Activated CD4-positive, alpha-beta T cell treated with anti-CD3 and anti-CD28 coated beads, Interleukin-2, amount 10 ng/mL, durations not matched to agents 24 days and 14 days (primary cell): ENCODE measurements at regions of chr11 and their contacts with region 1.

Region 1: GRCh38 chr11:122655527-122656072 is at the start of gene UBASH3B:
- DNase-seq: peak; percentile 89
- H3K4me3 Mint-ChIP-seq: peak within 1 kb of the TSS; percentile 97
- H3K27ac Mint-ChIP-seq: peak within 1 kb of the TSS; percentile 86
- H3K4me1 Mint-ChIP-seq: peaks cover 17% of the 10 kb centered on the region
- H3K27me3 Mint-ChIP-seq: peaks cover 50% of the 10 kb centered on the region
- total RNA-seq, gene UBASH3B: 10.9 and 14.8 TPM in 2 replicates

Region 2: GRCh38 chr11:122642472-122642922 is 13.1 kb before region 1 on chr11:
- intact Hi-C with region 1: loop called (anchors 2 kb)
- DNase-seq: no peak
- H3K4me3 Mint-ChIP-seq: no peak overlapping the region
- H3K27ac Mint-ChIP-seq: no peak overlapping the region
- H3K4me1 Mint-ChIP-seq: peaks cover 3% of the 10 kb centered on the region
- H3K27me3 Mint-ChIP-seq: peaks cover 19% of the 10 kb centered on the region

Region 3: GRCh38 chr11:122721964-122722266 is 66.3 kb after region 1 on chr11:
- intact Hi-C with region 1: loop called (anchors 2 kb)
- DNase-seq: peak; percentile 61
- H3K4me3 Mint-ChIP-seq: no peak overlapping the region
- H3K27ac Mint-ChIP-seq: peak overlapping the region; percentile 45
- H3K4me1 Mint-ChIP-seq: peaks cover 51% of the 10 kb centered on the region
- H3K27me3 Mint-ChIP-seq: peaks cover 14% of the 10 kb centered on the region

Region 4: DNA sequence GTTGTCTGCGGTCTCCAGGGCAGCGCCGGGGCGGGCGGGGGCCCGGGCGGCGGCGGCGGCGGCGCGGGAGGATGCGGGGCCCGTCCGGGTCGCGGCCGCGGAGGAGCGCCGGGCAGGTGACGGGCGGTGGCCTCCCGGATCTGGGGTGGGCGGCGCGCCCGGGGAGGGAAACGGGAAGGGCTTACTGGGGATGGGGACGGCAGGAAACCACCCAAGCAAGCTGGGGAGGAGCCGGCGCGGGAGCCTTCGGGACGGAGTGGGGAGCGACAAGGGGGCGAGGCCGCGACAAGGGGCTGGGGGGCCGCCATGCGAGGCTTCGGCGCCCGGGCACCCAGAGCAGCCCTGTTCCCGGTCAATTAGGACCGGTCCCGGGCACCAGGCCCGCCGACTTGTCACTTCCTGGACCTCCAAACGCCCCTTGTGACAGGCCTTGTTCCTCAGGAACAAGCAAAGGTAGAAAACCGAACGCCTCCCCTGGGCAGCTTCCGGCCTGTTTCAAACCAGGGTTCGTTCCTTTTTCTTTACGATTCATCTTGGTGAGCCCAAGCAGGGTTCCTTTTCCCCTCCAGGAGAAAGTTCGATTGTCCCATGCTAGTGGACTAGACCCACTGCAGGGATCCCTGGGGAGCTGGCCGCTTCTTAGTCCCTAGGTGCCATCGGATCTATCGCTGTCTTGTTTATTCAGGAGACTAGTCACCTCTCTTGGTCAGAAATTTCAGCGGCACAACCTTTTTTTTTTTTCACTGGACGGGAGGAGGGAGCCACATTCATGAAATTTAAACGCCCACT is 227.5 kb after region 1 on chr11:
- intact Hi-C with region 1: no loop called
- DNase-seq: peak; percentile 86
- H3K4me3 Mint-ChIP-seq: peak overlapping the region; percentile 85
- H3K27ac Mint-ChIP-seq: peak overlapping the region; percentile 75
- H3K4me1 Mint-ChIP-seq: peaks cover 19% of the 10 kb centered on the region
- H3K27me3 Mint-ChIP-seq: peaks cover 15% of the 10 kb centered on the region